Gastrocnemius medialis (tissue), 4 donors: ENCODE measurements at regions of chr10 and their contacts with region 1.

Region 1: DNA sequence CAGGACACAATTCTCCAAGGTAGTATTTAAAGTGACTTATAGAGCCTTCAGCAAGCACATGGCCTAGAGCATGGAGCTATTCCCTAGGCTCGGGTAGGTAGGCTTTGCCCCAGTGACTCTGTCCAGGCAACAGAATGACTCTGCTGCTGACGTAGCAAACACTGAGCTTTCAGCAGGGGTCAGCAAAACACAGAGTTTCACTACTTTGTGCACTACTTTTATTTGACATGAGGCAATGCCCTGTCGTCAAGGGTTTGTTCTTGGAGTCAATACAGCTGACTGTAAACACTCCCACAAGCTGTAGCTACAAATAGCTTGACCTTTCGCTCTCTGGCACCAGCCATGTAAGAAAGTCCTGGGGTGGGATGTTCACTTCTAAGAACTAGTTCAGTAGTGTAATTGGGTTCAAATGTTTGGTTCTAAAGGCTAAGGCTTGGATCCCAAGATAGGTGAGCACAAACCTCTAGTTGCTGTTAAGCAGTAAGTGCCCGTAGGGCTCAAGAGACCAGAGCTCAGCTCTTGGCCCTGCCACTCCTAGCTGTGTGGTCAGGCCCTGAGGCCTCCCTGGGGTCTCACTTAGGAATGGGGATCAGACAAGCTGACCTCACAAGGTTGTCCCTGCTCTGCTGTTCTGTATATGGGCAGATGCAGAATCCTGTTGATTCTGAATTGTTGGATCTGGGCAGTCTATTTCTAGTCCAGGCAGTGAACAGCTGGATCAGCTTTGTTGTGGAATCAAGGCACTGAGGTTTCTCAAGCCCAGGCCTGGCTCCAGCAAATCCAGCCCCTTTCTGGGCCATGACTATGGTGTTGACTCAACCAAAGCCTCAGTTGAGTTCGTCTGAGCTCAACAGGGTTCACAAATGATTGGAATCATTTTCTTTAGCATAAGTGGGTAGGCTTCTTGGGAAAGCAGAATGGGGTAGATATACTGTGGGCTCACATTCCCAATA is 10.7 kb downstream of the NODAL start:
- DNase-seq: peak; percentile 73 to 89
- ATAC-seq: peak; percentile 91 to 93
- H3K4me3 ChIP-seq: peak overlapping the region in 1 of 4 donors; percentile 14
- H3K27ac ChIP-seq: peak overlapping the region; percentile 76 to 91 (median 86)
- H3K4me1 ChIP-seq: peaks cover 68 to 83% of the 10 kb centered on the region in 2 donors
- H3K27me3 ChIP-seq: no peaks in the 10 kb centered on the region
- CTCF ChIP-seq: peak in 1 of 5 experiments; percentile 22
- POLR2A ChIP-seq: no peak

Region 2: DNA sequence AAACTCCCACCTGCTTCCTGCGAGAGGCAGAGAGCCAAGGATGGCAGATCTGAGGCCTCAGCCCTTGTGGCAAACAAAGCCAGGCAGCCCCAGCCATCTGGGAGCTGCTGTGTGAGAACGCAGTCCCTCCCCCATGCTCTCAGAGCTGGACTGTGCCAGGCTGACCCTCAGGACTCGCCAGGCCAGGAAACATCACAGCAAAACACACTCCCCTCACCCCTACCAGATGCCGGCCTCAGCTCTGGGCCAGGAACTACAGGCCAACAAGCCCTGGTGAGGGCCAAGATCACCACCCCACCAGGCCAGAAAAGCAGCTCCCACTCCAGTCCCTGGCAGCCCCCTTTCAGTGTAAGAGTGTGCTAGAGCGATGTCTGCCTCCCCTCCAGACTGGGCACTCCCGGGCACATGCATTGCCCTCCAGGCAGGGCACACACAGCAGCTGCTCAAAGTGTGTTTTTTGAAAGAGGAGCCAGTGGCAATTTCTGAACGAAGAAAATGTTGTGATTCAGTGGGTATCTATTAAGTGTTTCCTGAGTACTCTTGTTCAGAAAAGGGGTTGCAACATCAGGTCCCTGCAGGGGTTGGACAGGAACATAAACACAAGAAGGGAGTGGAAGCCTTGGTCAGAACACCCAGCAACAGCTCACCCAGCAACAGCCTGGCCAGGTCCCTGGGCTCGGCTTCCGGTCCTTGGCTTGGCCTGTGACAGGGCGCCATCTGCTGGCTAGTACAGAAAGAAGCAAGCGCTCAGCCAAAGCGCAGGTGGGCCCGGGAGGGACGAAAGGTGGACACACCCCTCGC is 66.6 kb before region 1 on chr10:
- in situ Hi-C with region 1: no loop called
- intact Hi-C with region 1: no loop called
- DNase-seq: peak; percentile 93 to 95
- ATAC-seq: peak; percentile 98 to 99
- H3K4me3 ChIP-seq: peak overlapping the region; percentile 9 to 38 (median 24)
- H3K27ac ChIP-seq: peak overlapping the region; percentile 86 to 91 (median 90)
- H3K4me1 ChIP-seq: peaks cover 12 to 15% of the 10 kb centered on the region in 2 donors
- H3K27me3 ChIP-seq: no peaks in the 10 kb centered on the region
- CTCF ChIP-seq: peak; percentile 93 to 98 (median 95)
- POLR2A ChIP-seq: peak in 1 of 2 donors; percentile 30

Region 3: GRCh38 chr10:70381471-70382421 is 49.0 kb before region 1 on chr10:
- in situ Hi-C with region 1: no loop called
- intact Hi-C with region 1: loop called (anchors 2 kb)
- DNase-seq: peak; percentile 82 to 91
- ATAC-seq: peak; percentile 59 to 60
- H3K4me3 ChIP-seq: peak overlapping the region; percentile 71 to 85 (median 72)
- H3K27ac ChIP-seq: peak overlapping the region; percentile 91 to 97 (median 95)
- H3K4me1 ChIP-seq: peaks cover 44 to 47% of the 10 kb centered on the region in 2 donors
- H3K27me3 ChIP-seq: no peaks in the 10 kb centered on the region
- CTCF ChIP-seq: peak in 1 of 5 experiments; percentile 37
- POLR2A ChIP-seq: peak; percentile 81 to 84

Region 4: GRCh38 chr10:70404036-70404786 is 26.6 kb before region 1 on chr10 and contains the start of gene EIF4EBP2:
- in situ Hi-C with region 1: no loop called
- intact Hi-C with region 1: loop called (anchors 2 kb)
- DNase-seq: peak; percentile 98 to 99
- ATAC-seq: peak; percentile 76 to 78
- H3K4me3 ChIP-seq: peak within 1 kb of the TSS; percentile 83 to 98 (median 87)
- H3K27ac ChIP-seq: peak within 1 kb of the TSS; percentile 93 to 99 (median 96)
- H3K4me1 ChIP-seq: peaks cover 36 to 42% of the 10 kb centered on the region in 2 donors
- H3K27me3 ChIP-seq: no peaks in the 10 kb centered on the region
- CTCF ChIP-seq: no peak
- POLR2A ChIP-seq: peak; percentile 99
- total RNA-seq, gene EIF4EBP2: 58.4 to 141 (median 107) TPM

Region 5: DNA sequence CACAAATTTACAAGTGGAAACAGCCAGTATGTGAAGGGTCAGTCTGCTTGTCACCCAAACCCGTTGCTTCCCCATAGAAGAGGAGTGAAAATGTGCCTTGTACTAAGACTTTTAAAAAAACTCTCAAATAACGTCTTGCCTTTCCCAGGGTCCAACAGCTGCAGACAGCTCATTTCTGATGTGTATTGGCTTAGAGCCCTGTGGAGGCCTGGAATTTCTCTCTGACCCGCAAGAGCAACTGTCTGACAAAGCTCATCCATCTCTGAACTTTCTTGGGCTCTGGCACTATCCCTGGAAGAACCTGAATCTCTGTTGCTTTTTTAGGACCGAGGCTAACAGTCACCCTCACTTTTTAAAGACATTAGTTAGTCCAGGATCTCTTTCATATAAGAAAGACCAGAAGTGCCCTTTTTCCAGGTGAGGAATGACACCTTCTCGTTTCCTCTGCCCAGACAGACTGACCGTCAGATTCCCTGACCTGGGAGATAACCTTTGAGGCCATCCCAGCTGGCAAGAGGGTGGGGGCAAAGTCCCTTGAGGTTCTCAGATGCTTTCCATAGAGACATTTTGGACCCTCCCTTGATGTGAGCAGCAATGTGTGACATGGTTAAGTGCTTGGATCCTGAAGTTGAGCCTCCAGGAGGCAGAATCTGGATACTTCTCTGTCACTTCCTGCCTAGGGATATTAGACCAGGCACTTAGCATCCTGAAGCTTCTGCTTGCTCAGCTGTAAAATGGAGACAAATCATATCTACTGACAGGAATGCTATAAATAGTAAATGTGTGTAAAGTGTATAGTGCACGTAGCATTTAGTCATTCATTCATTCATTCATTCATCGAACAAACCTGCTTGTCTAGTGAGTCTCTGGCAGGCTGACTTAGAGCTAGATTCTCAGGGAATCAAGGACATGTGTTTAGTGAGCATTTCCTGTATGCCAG is 15.2 kb after region 1 on chr10:
- in situ Hi-C with region 1: no loop called
- intact Hi-C with region 1: no loop called
- DNase-seq: no peak
- ATAC-seq: peak in 1 of 2 donors; percentile 12
- H3K4me3 ChIP-seq: no peak overlapping the region
- H3K27ac ChIP-seq: no peak overlapping the region
- H3K4me1 ChIP-seq: peaks cover 5 to 14% of the 10 kb centered on the region in 2 donors
- H3K27me3 ChIP-seq: peaks cover 7 to 15% (median 10%) of the 10 kb centered on the region in 3 donors
- CTCF ChIP-seq: no peak
- POLR2A ChIP-seq: no peak

Region 6: GRCh38 chr10:70758757-70759514 is 328.2 kb after region 1 on chr10:
- in situ Hi-C with region 1: loop called in 1 of 4 experiments (anchors 25 kb)
- intact Hi-C with region 1: no loop called
- DNase-seq: peak; percentile 34 to 45
- ATAC-seq: peak; percentile 65 to 89
- H3K4me3 ChIP-seq: no peak overlapping the region
- H3K27ac ChIP-seq: no peak overlapping the region
- H3K4me1 ChIP-seq: no peaks in the 10 kb centered on the region
- H3K27me3 ChIP-seq: no peaks in the 10 kb centered on the region
- CTCF ChIP-seq: peak; percentile 30 to 77 (median 66)
- POLR2A ChIP-seq: no peak